H1 (cell line): ENCODE measurements at regions of chr5 and their contacts with region 1.

Region 1: GRCh38 chr5:113059232-113060040 is 82.8 kb downstream of the DCP2 start:
- DNase-seq: no peak
- H3K4me3 ChIP-seq: no peak overlapping the region
- H3K27ac ChIP-seq: no peak overlapping the region
- H3K4me1 ChIP-seq: no peaks in the 10 kb centered on the region
- H3K27me3 ChIP-seq: no peaks in the 10 kb centered on the region
- CTCF ChIP-seq: no peak
- EP300 ChIP-seq: no peak
- POLR2A ChIP-seq: no peak
- RAD21 ChIP-seq: no peak

Region 2: GRCh38 chr5:112869948-112870347 is 189.5 kb before region 1 on chr5:
- CTCF ChIA-PET with region 1: no interaction called
- POLR2A ChIA-PET with region 1: no interaction called
- DNase-seq: no peak
- H3K4me3 ChIP-seq: no peak overlapping the region
- H3K27ac ChIP-seq: no peak overlapping the region
- H3K4me1 ChIP-seq: no peaks in the 10 kb centered on the region
- H3K27me3 ChIP-seq: no peaks in the 10 kb centered on the region
- CTCF ChIP-seq: no peak
- EP300 ChIP-seq: no peak
- POLR2A ChIP-seq: no peak
- RAD21 ChIP-seq: no peak

Region 3: DNA sequence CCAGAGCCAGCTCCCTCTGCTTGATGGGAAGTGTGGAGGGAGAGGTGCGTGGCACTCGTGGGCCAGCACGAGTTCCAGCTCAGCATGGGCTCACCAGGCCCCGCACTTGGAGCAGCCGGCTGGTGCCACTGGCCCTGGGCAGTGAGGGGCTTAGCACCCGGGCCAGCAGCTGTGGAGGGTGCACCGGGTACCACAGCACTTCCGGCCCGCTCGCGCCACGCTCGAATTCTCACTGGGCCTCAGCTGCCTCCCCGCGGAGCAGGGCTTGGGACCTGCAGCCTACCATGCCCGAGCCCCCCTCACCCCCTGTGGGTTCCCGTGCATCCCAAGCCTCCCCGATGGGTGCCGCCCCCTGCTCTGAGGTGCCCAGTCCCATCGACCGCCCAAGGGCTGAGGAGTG is 15.6 kb after region 1 on chr5:
- CTCF ChIA-PET with region 1: interaction called, 10 read pairs
- POLR2A ChIA-PET with region 1: no interaction called
- DNase-seq: no peak
- H3K4me3 ChIP-seq: no peak overlapping the region
- H3K27ac ChIP-seq: no peak overlapping the region
- H3K4me1 ChIP-seq: peaks cover 2 to 12% (median 4%) of the 10 kb centered on the region in 4 experiments; a peak in 5 of 7 replicates
- H3K27me3 ChIP-seq: no peaks in the 10 kb centered on the region
- CTCF ChIP-seq: no peak
- EP300 ChIP-seq: no peak
- POLR2A ChIP-seq: no peak
- RAD21 ChIP-seq: no peak